H1 (cell line): ENCODE measurements at regions of chr22 and their contacts with region 1.

Region 1: GRCh38 chr22:23893943-23894709 is at the start of gene MIF:
- DNase-seq: peak; percentile 93 to 100
- H3K4me3 ChIP-seq: peak within 1 kb of the TSS; percentile 72 to 91 (median 81)
- H3K27ac ChIP-seq: peak within 1 kb of the TSS; percentile 94
- H3K4me1 ChIP-seq: peaks cover 9 to 34% (median 17%) of the 10 kb centered on the region in 4 experiments
- H3K27me3 ChIP-seq: peaks cover 0 to 3% (median 1%) of the 10 kb centered on the region in 4 experiments; a peak in 2 of 7 replicates
- CTCF ChIP-seq: peak; percentile 74 to 89 (median 82)
- EP300 ChIP-seq: no peak
- POLR2A ChIP-seq: peak; percentile 94 to 96
- RAD21 ChIP-seq: peak; percentile 33 to 53; a peak in 3 of 4 replicates
- total RNA-seq, gene MIF: 1,082 and 1,119 TPM in 2 replicates

Region 2: DNA sequence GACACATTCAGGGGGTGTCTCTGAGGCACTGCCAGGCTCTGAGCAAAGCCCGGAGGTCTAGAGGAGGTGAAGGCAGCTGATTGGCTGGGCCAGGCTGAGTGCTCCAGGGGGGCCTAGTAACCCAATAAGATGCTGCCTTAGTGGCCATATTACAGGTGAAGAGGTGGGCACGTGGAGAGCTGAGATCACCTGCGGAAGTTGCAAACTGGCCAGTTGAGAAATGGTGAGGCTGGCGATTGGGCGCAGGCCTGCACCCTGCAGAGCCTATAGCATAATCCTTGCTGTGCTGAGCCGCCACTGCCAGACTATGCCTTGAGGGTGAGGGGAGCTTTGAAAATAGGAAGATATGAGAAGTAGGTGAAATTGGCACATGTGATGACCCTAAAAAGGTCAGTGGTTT is 77.0 kb before region 1 on chr22:
- CTCF ChIA-PET with region 1: no interaction called
- POLR2A ChIA-PET with region 1: no interaction called
- DNase-seq: no peak
- H3K4me3 ChIP-seq: no peak overlapping the region
- H3K27ac ChIP-seq: no peak overlapping the region
- H3K4me1 ChIP-seq: no peaks in the 10 kb centered on the region
- H3K27me3 ChIP-seq: no peaks in the 10 kb centered on the region
- CTCF ChIP-seq: no peak
- EP300 ChIP-seq: no peak
- POLR2A ChIP-seq: no peak
- RAD21 ChIP-seq: no peak

Region 3: GRCh38 chr22:23857606-23858483 is 36.3 kb before region 1 on chr22 and contains the start of gene SLC2A11:
- CTCF ChIA-PET with region 1: interaction called, 13 read pairs
- POLR2A ChIA-PET with region 1: interaction called, 20 read pairs
- DNase-seq: peak; percentile 95 to 96
- H3K4me3 ChIP-seq: peak within 1 kb of the TSS; percentile 48 to 84 (median 68)
- H3K27ac ChIP-seq: peak within 1 kb of the TSS; percentile 68
- H3K4me1 ChIP-seq: peaks cover 3 to 15% (median 5%) of the 10 kb centered on the region in 4 experiments; a peak in 6 of 7 replicates
- H3K27me3 ChIP-seq: no peaks in the 10 kb centered on the region
- CTCF ChIP-seq: peak; percentile 24 to 50 (median 37); a peak in 3 of 4 replicates
- EP300 ChIP-seq: no peak
- POLR2A ChIP-seq: peak in 1 of 2 experiments; percentile 66; a peak in 2 of 3 replicates
- RAD21 ChIP-seq: peak in 1 of 2 experiments; percentile 36; a peak in 2 of 4 replicates
- total RNA-seq, gene SLC2A11: 12.5 and 13.2 TPM in 2 replicates

Region 4: GRCh38 chr22:23878219-23878618 is 15.9 kb before region 1 on chr22:
- CTCF ChIA-PET with region 1: interaction called, 15 read pairs
- POLR2A ChIA-PET with region 1: interaction called, 11 read pairs
- DNase-seq: no peak
- H3K4me3 ChIP-seq: no peak overlapping the region
- H3K27ac ChIP-seq: no peak overlapping the region
- H3K4me1 ChIP-seq: no peaks in the 10 kb centered on the region
- H3K27me3 ChIP-seq: no peaks in the 10 kb centered on the region
- CTCF ChIP-seq: no peak
- EP300 ChIP-seq: no peak
- POLR2A ChIP-seq: no peak
- RAD21 ChIP-seq: no peak

Region 5: GRCh38 chr22:23904573-23905260 is 10.6 kb after region 1 on chr22:
- CTCF ChIA-PET with region 1: interaction called, 19 read pairs
- POLR2A ChIA-PET with region 1: interaction called, 31 read pairs
- DNase-seq: no peak
- H3K4me3 ChIP-seq: no peak overlapping the region
- H3K27ac ChIP-seq: no peak overlapping the region
- H3K4me1 ChIP-seq: peaks cover 2 to 12% (median 8%) of the 10 kb centered on the region in 4 experiments
- H3K27me3 ChIP-seq: peaks cover 0 to 3% (median under 1%) of the 10 kb centered on the region in 4 experiments; a peak in 3 of 7 replicates
- CTCF ChIP-seq: no peak
- EP300 ChIP-seq: no peak
- POLR2A ChIP-seq: no peak
- RAD21 ChIP-seq: no peak

Region 6: DNA sequence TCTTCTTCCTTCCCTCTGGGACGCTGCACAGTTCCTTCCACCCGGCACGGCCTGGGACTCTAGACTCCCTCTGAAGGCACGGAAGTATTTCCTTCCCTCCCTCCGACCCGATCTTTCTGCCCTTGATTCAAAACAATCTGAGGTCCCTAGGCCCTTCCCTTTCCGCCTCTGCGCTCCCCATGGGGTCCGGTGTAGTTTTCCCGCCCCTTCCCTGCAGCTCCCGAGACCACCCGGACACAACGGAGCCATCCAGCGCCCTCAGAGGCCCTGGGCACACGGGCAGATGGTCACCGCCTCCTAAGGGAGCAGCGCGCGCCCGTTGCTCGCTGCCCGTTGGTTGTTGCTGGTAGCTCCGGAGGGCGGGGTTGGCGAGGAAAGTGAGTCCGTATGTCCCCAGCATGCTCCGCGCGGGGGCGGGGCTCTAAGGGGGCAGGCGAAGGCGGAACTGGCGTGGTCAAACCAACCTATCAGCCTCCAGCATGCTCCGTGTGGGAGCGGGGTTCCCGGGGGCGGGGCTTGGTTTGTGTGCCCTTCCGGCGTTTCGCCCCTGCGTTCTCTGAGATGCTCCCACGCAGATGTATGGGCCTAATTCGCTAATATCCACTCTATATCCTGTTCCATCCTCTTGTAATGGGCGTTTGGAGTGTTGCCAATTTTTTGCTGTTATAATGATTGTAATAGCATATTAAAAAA is 19.7 kb after region 1 on chr22:
- CTCF ChIA-PET with region 1: interaction called, 13 read pairs
- POLR2A ChIA-PET with region 1: interaction called, 31 read pairs
- DNase-seq: peak; percentile 97 to 99
- H3K4me3 ChIP-seq: peak overlapping the region; percentile 41 to 59 (median 56)
- H3K27ac ChIP-seq: peak overlapping the region; percentile 74
- H3K4me1 ChIP-seq: peaks cover 0 to 5% (median 4%) of the 10 kb centered on the region in 4 experiments; a peak in 6 of 7 replicates
- H3K27me3 ChIP-seq: 0 out of 7 replicates have a peak, but pooled peaks cover 0 to 2% (median 0%) of the 10 kb centered on the region in 4 experiments
- CTCF ChIP-seq: no peak
- EP300 ChIP-seq: no peak
- POLR2A ChIP-seq: peak; percentile 73 to 79; a peak in 2 of 3 replicates
- RAD21 ChIP-seq: no peak

Region 7: DNA sequence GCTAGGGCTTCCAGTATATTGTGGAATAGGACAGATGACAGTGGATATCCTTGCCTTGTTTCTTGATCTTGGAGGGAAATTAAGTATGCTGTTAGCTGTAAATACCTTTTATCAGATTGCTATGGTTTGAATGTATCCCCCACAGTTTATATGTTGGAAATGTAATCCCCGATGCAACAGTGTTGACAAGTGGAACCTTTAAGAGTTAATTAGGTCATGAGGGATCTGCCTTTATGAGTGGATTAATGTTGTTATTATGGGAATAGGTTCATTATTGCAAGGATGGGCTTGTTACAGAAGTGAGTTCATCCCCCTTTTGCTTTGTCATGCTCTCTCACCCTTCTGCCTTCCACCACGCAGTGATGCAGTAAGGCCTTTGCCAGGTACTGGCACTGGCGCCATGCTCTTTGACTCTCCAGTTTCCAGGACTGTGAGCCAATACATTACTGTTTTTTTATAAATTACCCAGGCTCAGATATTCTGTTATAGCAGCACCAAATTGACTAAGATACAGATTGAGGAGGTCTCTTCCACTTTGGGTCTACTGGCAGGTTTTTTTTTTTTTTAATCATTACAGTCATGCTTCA is 133.4 kb after region 1 on chr22:
- CTCF ChIA-PET with region 1: no interaction called
- POLR2A ChIA-PET with region 1: no interaction called
- DNase-seq: no peak
- H3K4me3 ChIP-seq: no peak overlapping the region
- H3K27ac ChIP-seq: no peak overlapping the region
- H3K4me1 ChIP-seq: no peaks in the 10 kb centered on the region; a peak in 1 of 7 replicates
- H3K27me3 ChIP-seq: no peaks in the 10 kb centered on the region
- CTCF ChIP-seq: no peak
- EP300 ChIP-seq: no peak
- POLR2A ChIP-seq: no peak
- RAD21 ChIP-seq: no peak

Region 8: GRCh38 chr22:24087071-24087795 is 193.1 kb after region 1 on chr22:
- CTCF ChIA-PET with region 1: no interaction called
- POLR2A ChIA-PET with region 1: no interaction called
- DNase-seq: no peak
- H3K4me3 ChIP-seq: no peak overlapping the region
- H3K27ac ChIP-seq: no peak overlapping the region
- H3K4me1 ChIP-seq: no peaks in the 10 kb centered on the region
- H3K27me3 ChIP-seq: no peaks in the 10 kb centered on the region
- CTCF ChIP-seq: no peak
- EP300 ChIP-seq: no peak
- POLR2A ChIP-seq: no peak
- RAD21 ChIP-seq: no peak